ENCODE measurements at regions of chr18 and their contacts with region 1.

Region 1: GRCh38 chr18:11995445-11996189 is 14.3 kb downstream of the IMPA2 start:
- DNase-seq: peak in 1 of 2 experiments; percentile 71
- H3K4me3 ChIP-seq: peak overlapping the region in 1 of 4 experiments; percentile 23; a peak in 2 of 8 replicates
- H3K27ac ChIP-seq: no peak overlapping the region
- H3K4me1 ChIP-seq: peaks cover 8 to 14% (median 8%) of the 10 kb centered on the region in 4 experiments; a peak in 6 of 7 replicates
- H3K27me3 ChIP-seq: no peaks in the 10 kb centered on the region
- CTCF ChIP-seq: peak; percentile 81 to 89 (median 89)
- EP300 ChIP-seq: no peak
- POLR2A ChIP-seq: no peak
- RAD21 ChIP-seq: peak; percentile 90 to 93

Region 2: GRCh38 chr18:11733031-11733430 is 262.6 kb before region 1 on chr18:
- CTCF ChIA-PET with region 1: interaction called, 27 read pairs
- POLR2A ChIA-PET with region 1: no interaction called
- DNase-seq: peak; percentile 54 to 97
- H3K4me3 ChIP-seq: no peak overlapping the region
- H3K27ac ChIP-seq: no peak overlapping the region
- H3K4me1 ChIP-seq: peaks cover 0 to 2% (median 0%) of the 10 kb centered on the region in 4 experiments; a peak in 2 of 7 replicates
- H3K27me3 ChIP-seq: peaks cover 0 to 3% (median 0%) of the 10 kb centered on the region in 4 experiments; a peak in 1 of 7 replicates
- CTCF ChIP-seq: peak; percentile 82 to 96 (median 92)
- EP300 ChIP-seq: no peak
- POLR2A ChIP-seq: no peak
- RAD21 ChIP-seq: peak; percentile 94 to 96

Region 3: GRCh38 chr18:11925800-11926481 is 69.7 kb before region 1 on chr18:
- CTCF ChIA-PET with region 1: interaction called, 49 read pairs
- POLR2A ChIA-PET with region 1: no interaction called
- DNase-seq: no peak
- H3K4me3 ChIP-seq: no peak overlapping the region
- H3K27ac ChIP-seq: no peak overlapping the region
- H3K4me1 ChIP-seq: no peaks in the 10 kb centered on the region; a peak in 1 of 7 replicates
- H3K27me3 ChIP-seq: no peaks in the 10 kb centered on the region
- CTCF ChIP-seq: no peak
- EP300 ChIP-seq: no peak
- POLR2A ChIP-seq: no peak
- RAD21 ChIP-seq: no peak

Region 4: DNA sequence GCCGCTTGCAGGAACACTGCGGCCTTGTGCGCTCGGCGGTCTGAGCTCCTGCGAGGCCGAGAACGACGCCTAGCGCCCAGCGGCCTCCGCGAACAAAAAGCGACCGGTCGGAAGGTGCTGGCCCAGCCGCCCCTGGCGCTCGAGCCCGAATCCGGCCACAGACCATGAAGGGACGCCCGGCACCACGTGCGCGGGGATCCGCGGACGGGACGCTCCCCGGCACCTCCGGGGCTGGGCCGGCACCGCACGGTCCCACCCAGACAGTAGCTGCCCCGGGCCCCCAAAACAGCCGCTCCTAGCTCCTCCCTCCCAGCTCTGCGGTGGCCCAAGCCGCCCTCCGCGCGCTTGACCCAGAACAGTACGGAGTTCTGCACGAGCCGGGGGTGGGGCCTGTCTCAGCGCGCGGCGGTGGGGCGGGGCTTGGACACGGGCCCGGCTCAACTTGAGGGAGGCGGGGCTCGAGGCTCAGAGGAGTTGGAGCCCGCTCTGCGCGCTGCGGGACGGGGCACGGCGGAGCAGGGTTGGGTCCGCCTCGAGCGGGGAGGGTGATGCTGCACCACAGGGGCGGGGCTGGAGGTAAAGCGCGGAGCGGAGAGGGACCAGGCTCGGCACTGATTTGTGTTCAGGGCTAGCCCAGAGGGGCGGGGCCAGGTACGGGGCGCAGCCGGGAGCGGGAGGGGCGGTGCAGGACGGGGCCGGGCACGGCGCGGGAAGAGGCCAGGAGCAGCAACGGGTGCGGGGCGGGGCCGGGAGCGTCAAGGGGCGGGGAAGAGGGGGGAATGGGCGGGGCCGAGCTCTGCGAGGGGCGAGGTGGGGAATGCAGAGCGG is 14.8 kb before region 1 on chr18:
- CTCF ChIA-PET with region 1: interaction called, 35 read pairs
- POLR2A ChIA-PET with region 1: interaction called, 100 read pairs
- DNase-seq: peak; percentile 98 to 99
- H3K4me3 ChIP-seq: peak overlapping the region; percentile 40 to 83 (median 63)
- H3K27ac ChIP-seq: peak overlapping the region; percentile 94
- H3K4me1 ChIP-seq: peaks cover 7 to 15% (median 9%) of the 10 kb centered on the region in 4 experiments
- H3K27me3 ChIP-seq: no peaks in the 10 kb centered on the region
- CTCF ChIP-seq: peak in 1 of 3 experiments; percentile 13; a peak in 1 of 4 replicates
- EP300 ChIP-seq: no peak
- POLR2A ChIP-seq: peak; percentile 79 to 86
- RAD21 ChIP-seq: peak; percentile 12; a peak in 2 of 4 replicates

Region 5: GRCh38 chr18:12038639-12039417 is 43.2 kb after region 1 on chr18:
- CTCF ChIA-PET with region 1: interaction called, 26 read pairs
- POLR2A ChIA-PET with region 1: interaction called, 5 read pairs
- DNase-seq: peak; percentile 50 to 94
- H3K4me3 ChIP-seq: peak overlapping the region; percentile 33 to 72 (median 65)
- H3K27ac ChIP-seq: no peak overlapping the region
- H3K4me1 ChIP-seq: no peaks in the 10 kb centered on the region
- H3K27me3 ChIP-seq: peaks cover 0 to 13% (median 10%) of the 10 kb centered on the region in 4 experiments; a peak in 6 of 7 replicates
- CTCF ChIP-seq: peak; percentile 95 to 98 (median 95)
- EP300 ChIP-seq: no peak
- POLR2A ChIP-seq: no peak
- RAD21 ChIP-seq: peak; percentile 93 to 96